Gastrocnemius medialis (tissue), 4 donors: ENCODE measurements at regions of chr11 and their contacts with region 1.

Region 1: DNA sequence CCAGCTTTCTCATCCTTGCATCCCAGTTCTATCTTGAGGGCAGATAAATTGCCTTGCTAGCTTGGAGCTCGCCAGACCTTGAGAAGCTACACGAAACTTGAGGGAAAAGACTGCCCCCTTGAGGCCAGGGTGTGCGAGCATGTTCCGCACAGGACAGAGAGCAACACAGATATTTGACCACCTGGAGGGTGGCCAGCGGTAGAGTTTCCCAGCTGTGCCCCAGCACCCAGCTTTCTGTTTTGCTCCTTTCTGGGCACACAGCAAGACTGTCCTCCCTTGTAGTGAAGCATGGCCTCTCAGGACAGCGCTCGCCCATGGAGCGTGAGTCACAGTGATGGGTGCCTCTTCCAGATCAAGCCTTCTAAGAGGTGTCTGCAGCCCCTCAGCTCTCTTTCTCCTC is 23.5 kb downstream of the SPATA19 start:
- DNase-seq: no peak
- ATAC-seq: no peak
- H3K4me3 ChIP-seq: no peak overlapping the region
- H3K27ac ChIP-seq: no peak overlapping the region
- H3K4me1 ChIP-seq: no peaks in the 10 kb centered on the region
- H3K27me3 ChIP-seq: no peaks in the 10 kb centered on the region
- CTCF ChIP-seq: peak in 2 of 5 experiments; percentile 9 to 50
- POLR2A ChIP-seq: no peak

Region 2: DNA sequence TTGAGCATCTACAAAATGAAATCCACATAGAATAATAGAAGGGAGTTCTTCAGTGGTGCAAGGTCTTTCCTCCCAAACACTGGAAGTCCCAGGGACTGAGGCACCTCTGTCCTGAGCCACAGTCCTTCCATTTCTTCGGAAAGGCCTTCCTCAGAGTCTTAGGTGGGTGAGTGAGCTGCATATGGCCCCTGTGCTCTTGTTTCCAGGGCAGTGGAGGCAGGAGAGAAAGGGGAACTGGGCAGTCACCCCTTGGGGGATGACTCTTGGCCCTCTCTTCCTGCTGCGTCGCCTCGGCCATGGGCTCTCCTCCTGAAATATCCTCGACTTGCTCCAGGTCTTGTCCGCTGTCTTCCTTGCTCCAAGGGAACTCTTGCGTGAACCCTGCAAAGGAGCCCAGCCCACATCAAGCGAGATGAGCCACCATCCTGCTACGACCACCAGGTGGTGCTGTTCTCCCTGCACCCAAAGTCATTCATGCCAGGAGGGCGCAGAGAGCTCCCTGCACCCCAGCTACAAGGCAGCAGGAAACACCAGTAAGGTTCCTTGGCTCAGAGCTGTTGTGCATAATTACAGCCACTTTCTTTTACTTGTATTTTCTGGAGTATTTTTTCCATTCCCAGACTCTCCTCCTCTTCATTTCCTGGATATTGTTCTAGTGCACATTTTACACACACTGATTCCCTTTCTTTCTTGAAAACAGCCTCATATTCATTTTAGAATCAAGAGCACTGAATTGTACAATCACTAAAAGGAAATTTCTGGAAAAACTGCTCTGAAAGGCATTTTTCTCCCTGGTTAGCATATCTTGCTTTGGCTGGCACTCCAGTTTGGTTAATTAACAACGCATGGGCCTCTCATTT is 687.2 kb before region 1 on chr11:
- in situ Hi-C with region 1: loop called in 2 of 4 experiments (anchors 10 to 25 kb)
- intact Hi-C with region 1: no loop called
- DNase-seq: no peak
- ATAC-seq: no peak
- H3K4me3 ChIP-seq: no peak overlapping the region
- H3K27ac ChIP-seq: no peak overlapping the region
- H3K4me1 ChIP-seq: no peaks in the 10 kb centered on the region
- H3K27me3 ChIP-seq: peaks cover 0 to 2% (median 0%) of the 10 kb centered on the region in 3 donors
- CTCF ChIP-seq: peak; percentile 42 to 82 (median 69)
- POLR2A ChIP-seq: no peak

Region 3: DNA sequence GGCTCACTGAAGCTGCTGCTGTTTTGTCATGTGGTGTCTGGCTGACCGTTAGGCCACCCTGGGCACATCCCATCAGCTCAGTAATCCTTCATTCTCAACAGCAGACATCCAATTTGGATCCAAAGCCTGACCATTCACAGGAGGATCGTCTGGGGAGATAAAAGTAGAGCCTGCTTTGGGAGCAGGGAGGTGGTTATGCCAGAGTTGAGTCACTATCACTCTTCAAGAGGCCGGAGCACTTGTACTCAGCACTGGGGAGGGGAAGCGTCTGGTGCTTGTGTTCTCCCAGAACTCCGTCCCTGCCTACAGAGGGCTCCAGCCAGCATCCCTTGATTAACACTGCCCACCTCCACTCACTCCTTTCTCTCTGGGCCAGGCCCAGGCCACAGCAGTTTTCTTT is 672.1 kb before region 1 on chr11:
- in situ Hi-C with region 1: loop called in 2 of 4 experiments (anchors 10 to 25 kb)
- intact Hi-C with region 1: no loop called
- DNase-seq: no peak
- ATAC-seq: no peak
- H3K4me3 ChIP-seq: no peak overlapping the region
- H3K27ac ChIP-seq: no peak overlapping the region
- H3K4me1 ChIP-seq: no peaks in the 10 kb centered on the region
- H3K27me3 ChIP-seq: no peaks in the 10 kb centered on the region
- CTCF ChIP-seq: no peak
- POLR2A ChIP-seq: no peak

Region 4: DNA sequence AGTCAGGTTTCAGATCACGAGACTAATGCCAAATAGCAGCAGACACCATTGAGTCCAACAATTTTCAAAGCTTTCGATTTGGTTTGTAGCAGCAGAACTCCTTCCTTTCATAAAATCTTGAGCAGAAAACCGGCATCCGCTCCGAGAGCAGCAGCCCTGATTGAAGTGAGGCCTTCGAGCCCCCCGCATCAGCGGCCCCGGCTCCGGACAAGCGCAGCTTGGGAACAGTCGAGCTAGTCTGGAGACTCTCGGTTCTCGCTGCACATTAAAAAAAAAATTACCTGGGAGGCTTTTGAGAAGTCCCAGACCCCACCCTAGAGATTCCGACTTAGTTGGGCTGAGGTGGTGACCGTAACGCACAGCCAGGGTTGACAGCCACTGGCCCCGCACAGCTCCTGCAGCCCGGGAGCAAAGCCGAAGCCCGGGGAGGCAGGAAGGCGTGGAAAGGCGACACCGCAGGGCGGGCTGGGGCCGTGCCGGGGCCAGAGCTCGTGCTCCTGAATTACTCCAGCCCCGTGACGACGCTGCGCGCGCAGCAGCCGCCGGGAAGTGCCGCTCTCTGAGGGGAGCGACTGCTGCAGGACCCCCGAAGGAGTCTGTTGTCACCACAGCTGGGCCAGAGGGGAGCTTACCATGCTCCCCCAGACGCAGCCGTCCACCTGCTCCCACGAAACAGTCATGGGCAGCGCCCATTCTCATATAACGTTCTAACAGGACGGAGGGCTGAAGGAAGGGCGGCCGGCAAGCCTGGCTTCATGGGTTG is 34.2 kb before region 1 on chr11:
- in situ Hi-C with region 1: no loop called
- intact Hi-C with region 1: no loop called
- DNase-seq: peak in 1 of 2 donors; percentile 22
- ATAC-seq: peak; percentile 45 to 51
- H3K4me3 ChIP-seq: peak overlapping the region; percentile 24 to 43 (median 36)
- H3K27ac ChIP-seq: no peak overlapping the region
- H3K4me1 ChIP-seq: no peaks in the 10 kb centered on the region
- H3K27me3 ChIP-seq: peaks cover 0 to 3% (median 0%) of the 10 kb centered on the region in 3 donors
- CTCF ChIP-seq: no peak
- POLR2A ChIP-seq: no peak